Activated naive CD8-positive, alpha-beta T cell treated with anti-CD3 and anti-CD28 coated beads, Interleukin-2, amount 10 ng/mL, durations not matched to agents 7 days and 5 days (primary cell): ENCODE measurements at regions of chr19 and their contacts with region 1.

Region 1: GRCh38 chr19:48255376-48256303 is at the start of gene CARD8:
- DNase-seq: peak; percentile 76
- ATAC-seq: peak; percentile 79
- H3K4me3 Mint-ChIP-seq: peak within 1 kb of the TSS; percentile 94
- H3K27ac Mint-ChIP-seq: peak within 1 kb of the TSS; percentile 96
- H3K4me1 Mint-ChIP-seq: peaks cover 59% of the 10 kb centered on the region
- H3K27me3 Mint-ChIP-seq: no peaks in the 10 kb centered on the region
- total RNA-seq, gene CARD8: 249 to 255 TPM

Region 2: DNA sequence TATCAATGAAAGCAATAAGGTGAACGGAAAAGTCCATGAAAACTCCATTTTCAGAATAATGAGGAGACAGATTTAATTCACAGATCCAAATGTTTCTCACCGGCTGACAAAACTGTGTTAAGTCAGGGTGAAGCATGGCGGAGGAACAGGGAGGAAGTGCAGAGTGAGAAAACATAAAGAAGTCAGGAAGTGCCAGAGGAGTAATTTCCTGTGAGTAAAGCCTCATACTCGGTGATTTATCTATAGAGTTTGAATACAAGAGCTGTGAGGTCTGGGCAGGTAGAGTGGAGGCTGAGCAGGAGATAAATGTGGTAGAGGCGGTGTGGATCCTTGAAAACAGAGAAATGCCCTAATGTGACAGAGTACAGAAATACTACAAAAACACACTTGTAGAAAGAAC is 11.4 kb before region 1 on chr19:
- POLR2A ChIA-PET with region 1: interaction called, 13 read pairs
- DNase-seq: no peak
- ATAC-seq: peak; percentile 88
- H3K4me3 Mint-ChIP-seq: peak overlapping the region; percentile 75
- H3K27ac Mint-ChIP-seq: peak overlapping the region; percentile 85
- H3K4me1 Mint-ChIP-seq: peaks cover 44% of the 10 kb centered on the region
- H3K27me3 Mint-ChIP-seq: no peaks in the 10 kb centered on the region

Region 3: DNA sequence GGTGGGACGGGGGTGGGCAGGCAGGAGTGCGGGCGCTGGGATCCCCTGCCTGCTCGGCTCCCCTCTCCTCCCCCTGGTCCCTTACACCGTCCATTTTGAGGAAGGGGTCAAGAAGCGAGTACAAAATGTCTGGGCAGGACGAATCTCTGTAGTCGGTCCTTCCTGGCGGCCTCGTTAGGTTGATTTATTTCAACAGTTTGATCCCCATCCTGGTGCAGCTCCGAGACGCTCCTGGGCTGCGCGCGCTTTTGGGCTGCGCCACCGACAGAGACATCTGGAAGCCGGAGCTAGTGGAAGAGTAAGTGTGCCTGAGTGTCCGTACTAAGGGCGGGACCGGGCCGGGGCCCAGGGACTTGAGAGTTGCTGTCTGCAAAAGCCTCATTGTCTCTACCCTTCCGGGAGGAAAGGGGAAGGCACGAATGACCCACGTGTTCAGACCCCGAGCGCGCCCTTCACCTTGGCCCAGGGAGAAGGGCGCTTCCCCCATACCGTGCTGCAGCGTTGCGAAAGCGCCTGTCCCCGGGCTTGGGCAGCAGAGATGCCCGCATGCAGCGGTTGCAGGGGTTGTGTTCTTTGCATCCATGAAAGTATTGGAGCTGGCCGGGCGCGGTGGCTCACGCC is 16.0 kb after region 1 on chr19:
- POLR2A ChIA-PET with region 1: no interaction called
- DNase-seq: peak; percentile 48
- ATAC-seq: peak; percentile 55
- H3K4me3 Mint-ChIP-seq: peak overlapping the region; percentile 88
- H3K27ac Mint-ChIP-seq: peak overlapping the region; percentile 50
- H3K4me1 Mint-ChIP-seq: peaks cover 13% of the 10 kb centered on the region
- H3K27me3 Mint-ChIP-seq: peaks cover 12% of the 10 kb centered on the region